A549 (cell line): ENCODE measurements at regions of chr19 and their contacts with region 1.

Region 1: DNA sequence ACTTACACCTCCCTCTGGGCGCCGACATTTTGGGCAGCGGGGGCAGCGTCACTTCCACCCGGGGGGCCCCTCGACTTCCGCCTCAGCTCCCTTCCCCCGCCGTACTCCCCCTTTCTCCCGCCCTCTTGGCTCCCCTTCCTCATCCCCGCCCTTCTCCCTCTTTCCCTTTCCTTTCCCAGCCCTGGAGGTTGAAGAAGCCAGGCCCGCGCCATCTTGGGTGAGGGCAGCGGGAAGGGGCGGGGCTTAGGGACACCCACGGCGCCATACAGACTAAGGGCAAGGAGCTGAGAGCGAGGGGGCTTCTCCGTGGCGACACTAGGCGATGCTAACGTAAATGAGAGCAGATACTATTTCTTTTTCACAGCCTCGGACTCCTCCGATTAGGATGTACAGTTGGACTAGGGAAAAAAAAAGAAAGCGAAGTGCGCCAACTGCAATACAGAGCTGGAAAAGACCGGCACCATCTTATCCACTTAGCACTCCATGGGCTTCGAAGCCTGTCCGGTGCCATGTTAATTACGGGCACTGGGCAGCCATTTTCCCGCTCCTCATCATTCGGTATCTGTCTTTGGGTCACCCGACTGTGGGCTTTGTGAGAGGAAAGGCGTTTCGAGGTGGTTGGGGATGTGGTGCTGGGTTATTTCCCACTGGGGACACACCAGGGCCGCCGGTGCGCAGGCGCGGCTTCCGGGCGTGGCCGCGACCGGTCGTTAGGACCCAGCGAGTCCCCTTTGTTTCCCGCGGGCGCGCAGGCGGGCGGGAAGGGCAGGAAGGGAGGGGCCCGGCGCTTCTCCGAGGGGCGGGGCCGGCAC is at the start of gene FIZ1:
- DNase-seq: peak; percentile 90 to 99
- ATAC-seq: peak; percentile 78 to 91
- H3K4me3 ChIP-seq: peak within 1 kb of the TSS; percentile 69
- H3K27ac ChIP-seq: peak within 1 kb of the TSS; percentile 95 to 96
- H3K4me1 ChIP-seq: peaks cover 20% of the 10 kb centered on the region
- CTCF ChIP-seq: no peak
- EP300 ChIP-seq: no peak
- POLR2A ChIP-seq: peak; percentile 33
- RAD21 ChIP-seq: no peak; a peak in 1 of 5 replicates
- polyA plus RNA-seq, gene FIZ1: 10.3 and 10.4 TPM in 2 replicates

Region 2: GRCh38 chr19:55476100-55476775 is 123.4 kb before region 1 on chr19 and contains the start of gene ZNF628:
- CTCF ChIA-PET with region 1: no interaction called
- POLR2A ChIA-PET with region 1: interaction called, 13 read pairs
- DNase-seq: peak; percentile 99 to 100
- ATAC-seq: peak; percentile 94
- H3K4me3 ChIP-seq: peak within 1 kb of the TSS; percentile 56
- H3K27ac ChIP-seq: peak within 1 kb of the TSS; percentile 84 to 92
- H3K4me1 ChIP-seq: peaks cover 26% of the 10 kb centered on the region
- CTCF ChIP-seq: no peak
- EP300 ChIP-seq: no peak
- POLR2A ChIP-seq: peak; percentile 26; the same call in 1 of the 2 replicates
- RAD21 ChIP-seq: no peak
- polyA plus RNA-seq, gene ZNF628: 0.32 and 0.48 TPM in 2 replicates

Region 3: DNA sequence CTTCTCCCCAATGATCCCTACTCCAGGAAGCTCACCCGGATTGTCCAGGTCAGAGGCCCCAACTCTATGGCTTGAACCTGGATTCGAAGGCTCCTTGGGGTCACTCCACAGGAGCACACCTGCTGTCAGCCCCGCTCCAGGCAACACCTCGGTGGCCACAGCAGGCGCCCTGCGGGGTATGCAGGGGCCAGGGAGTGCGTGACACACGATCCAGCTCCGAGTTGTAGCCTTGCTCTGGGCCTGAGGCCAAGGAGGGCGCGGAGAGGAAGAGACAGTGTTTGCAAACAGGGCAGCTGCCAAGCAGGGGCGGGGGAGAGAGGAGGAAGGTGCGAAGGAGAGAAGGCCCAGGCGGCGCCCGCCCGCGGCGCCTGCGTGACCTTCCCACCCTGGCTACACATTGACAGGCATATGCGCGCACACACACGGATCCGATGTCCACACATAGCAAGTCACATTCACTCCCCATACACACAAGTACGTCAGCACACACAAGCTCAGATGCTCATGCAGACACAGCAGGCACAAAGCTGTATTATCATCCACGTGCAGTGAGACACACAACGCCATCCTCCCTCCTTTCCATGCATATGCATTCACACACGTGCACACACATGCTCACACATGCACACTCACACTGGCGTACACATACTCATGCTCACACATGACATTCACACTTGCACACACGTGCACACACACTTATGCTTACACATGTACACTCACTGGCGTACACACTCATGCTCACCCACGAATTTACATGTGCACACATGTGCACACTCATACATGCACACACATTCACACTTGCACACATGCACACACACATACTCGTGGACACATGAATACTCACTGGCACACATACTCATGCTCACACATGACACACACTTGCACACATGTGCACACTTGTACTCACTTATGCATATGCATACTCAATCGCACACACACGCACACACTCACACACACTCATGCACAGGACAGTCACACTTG is 73.2 kb before region 1 on chr19:
- CTCF ChIA-PET with region 1: interaction called, 3 read pairs
- POLR2A ChIA-PET with region 1: interaction called, 13 read pairs
- DNase-seq: peak; percentile 82 to 95
- ATAC-seq: peak; percentile 79 to 88
- H3K4me3 ChIP-seq: no peak overlapping the region
- H3K27ac ChIP-seq: peak overlapping the region; percentile 64 to 78
- H3K4me1 ChIP-seq: peaks cover 48% of the 10 kb centered on the region
- CTCF ChIP-seq: no peak
- EP300 ChIP-seq: peak in 1 of 2 experiments; percentile 43; a peak in 1 of 5 replicates
- POLR2A ChIP-seq: no peak
- RAD21 ChIP-seq: peak in 1 of 2 experiments; percentile 9; a peak in 1 of 5 replicates

Region 4: DNA sequence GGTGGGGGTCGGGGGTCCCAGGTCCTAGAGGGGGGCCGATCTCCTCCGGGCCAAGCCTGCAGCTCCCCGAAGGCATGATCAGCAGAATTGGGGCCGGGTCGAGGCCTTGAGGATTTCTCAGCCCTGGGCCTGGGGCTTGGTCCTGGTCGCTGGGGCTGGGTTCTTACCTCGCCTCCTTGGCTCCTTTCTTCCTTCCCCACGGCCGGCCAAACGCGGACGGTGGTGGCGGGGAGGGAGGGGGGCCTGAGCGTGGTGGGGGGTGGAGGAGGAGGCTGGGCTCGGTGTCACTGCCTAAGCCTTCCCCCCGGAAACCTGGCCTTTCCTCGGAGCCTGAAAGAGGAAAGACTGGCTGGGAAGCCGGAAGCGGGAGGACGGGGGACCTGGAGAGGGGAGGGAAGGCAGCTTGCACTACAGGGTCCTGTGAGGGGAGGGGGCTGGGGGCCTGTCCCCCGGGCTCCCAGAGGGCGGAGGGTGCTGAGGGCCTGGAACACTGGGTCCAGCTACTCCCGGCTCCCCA is 19.0 kb before region 1 on chr19 and contains the start of gene ZNF579:
- CTCF ChIA-PET with region 1: interaction called, 5 read pairs
- POLR2A ChIA-PET with region 1: interaction called, 22 read pairs
- DNase-seq: peak; percentile 89 to 96
- ATAC-seq: peak; percentile 79 to 81
- H3K4me3 ChIP-seq: peak within 1 kb of the TSS; percentile 96
- H3K27ac ChIP-seq: peak within 1 kb of the TSS; percentile 99 to 100
- H3K4me1 ChIP-seq: peaks cover 26% of the 10 kb centered on the region
- CTCF ChIP-seq: no peak
- EP300 ChIP-seq: no peak; a peak in 1 of 5 replicates
- POLR2A ChIP-seq: peak; percentile 48
- RAD21 ChIP-seq: peak; percentile 30 to 47; a peak in 2 of 5 replicates
- polyA plus RNA-seq, gene ZNF579: 4.2 and 6.5 TPM in 2 replicates

Region 5: GRCh38 chr19:55624109-55625003 is 24.7 kb after region 1 on chr19 and contains the start of gene ZNF784:
- CTCF ChIA-PET with region 1: interaction called, 57 read pairs
- POLR2A ChIA-PET with region 1: interaction called, 33 read pairs
- DNase-seq: peak; percentile 89 to 96
- ATAC-seq: peak; percentile 74 to 82
- H3K4me3 ChIP-seq: peak within 1 kb of the TSS; percentile 48
- H3K27ac ChIP-seq: peak within 1 kb of the TSS; percentile 89 to 93
- H3K4me1 ChIP-seq: 0 out of 3 replicates have a peak, but pooled peaks cover 7% of the 10 kb centered on the region
- CTCF ChIP-seq: no peak
- EP300 ChIP-seq: no peak
- POLR2A ChIP-seq: peak; percentile 80
- RAD21 ChIP-seq: no peak
- polyA plus RNA-seq, gene ZNF784: 3.5 and 4.1 TPM in 2 replicates

Region 6: DNA sequence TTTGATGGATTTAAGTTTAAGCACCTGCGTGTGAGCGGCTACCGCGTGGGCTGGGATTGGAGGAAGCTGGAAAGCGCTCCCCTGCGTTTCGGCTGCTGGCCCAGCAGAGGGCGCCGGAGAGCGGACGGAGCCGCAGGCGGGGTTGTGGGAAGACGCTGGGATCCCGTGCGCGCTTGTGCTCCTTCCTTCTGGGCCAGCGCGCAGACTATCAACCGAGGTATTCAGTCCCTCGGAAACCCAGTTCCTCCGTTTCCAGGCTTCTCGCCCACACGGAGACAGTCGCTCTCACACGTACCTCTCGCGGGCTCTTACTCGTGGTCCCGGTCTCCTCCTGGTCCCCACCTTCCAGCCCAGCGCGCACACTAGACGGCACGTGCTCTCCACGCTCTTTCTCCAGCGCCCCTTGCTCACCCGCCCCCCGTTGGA is 104.1 kb after region 1 on chr19:
- CTCF ChIA-PET with region 1: no interaction called
- POLR2A ChIA-PET with region 1: no interaction called
- DNase-seq: peak in 1 of 2 experiments; percentile 41
- ATAC-seq: peak in 1 of 2 experiments; percentile 63; a peak in 3 of 6 replicates
- H3K4me3 ChIP-seq: no peak overlapping the region
- H3K27ac ChIP-seq: no peak overlapping the region
- H3K4me1 ChIP-seq: no peaks in the 10 kb centered on the region
- CTCF ChIP-seq: no peak
- EP300 ChIP-seq: no peak
- POLR2A ChIP-seq: no peak
- RAD21 ChIP-seq: 0 out of 5 replicates have a peak, but pooled peaks of 1 of the 2 experiments have one; percentile 12